Mammary epithelial cell (primary cell): ENCODE measurements at regions of chr3 and their contacts with region 1.

Region 1: GRCh38 chr3:59424268-59425010 is 374.6 kb upstream of the CFAP20DC start:
- DNase-seq: peak; percentile 92
- H3K4me3 ChIP-seq: no peak overlapping the region
- H3K27ac ChIP-seq: peak overlapping the region; percentile 59
- H3K4me1 ChIP-seq: peaks cover 40% of the 10 kb centered on the region
- H3K27me3 ChIP-seq: no peaks in the 10 kb centered on the region
- CTCF ChIP-seq: no peak

Region 2: GRCh38 chr3:58585005-58585786 is 839.2 kb before region 1 on chr3:
- CTCF ChIA-PET with region 1: interaction called, 13 read pairs
- dilution Hi-C with region 1: no loop called
- in situ Hi-C with region 1: no loop called
- intact Hi-C with region 1: no loop called
- DNase-seq: peak; percentile 53
- H3K4me3 ChIP-seq: peak overlapping the region; percentile 16 to 53 (median 49)
- H3K27ac ChIP-seq: no peak overlapping the region
- H3K4me1 ChIP-seq: peaks cover 9% of the 10 kb centered on the region
- H3K27me3 ChIP-seq: peaks cover 15% of the 10 kb centered on the region
- CTCF ChIP-seq: peak; percentile 66

Region 3: DNA sequence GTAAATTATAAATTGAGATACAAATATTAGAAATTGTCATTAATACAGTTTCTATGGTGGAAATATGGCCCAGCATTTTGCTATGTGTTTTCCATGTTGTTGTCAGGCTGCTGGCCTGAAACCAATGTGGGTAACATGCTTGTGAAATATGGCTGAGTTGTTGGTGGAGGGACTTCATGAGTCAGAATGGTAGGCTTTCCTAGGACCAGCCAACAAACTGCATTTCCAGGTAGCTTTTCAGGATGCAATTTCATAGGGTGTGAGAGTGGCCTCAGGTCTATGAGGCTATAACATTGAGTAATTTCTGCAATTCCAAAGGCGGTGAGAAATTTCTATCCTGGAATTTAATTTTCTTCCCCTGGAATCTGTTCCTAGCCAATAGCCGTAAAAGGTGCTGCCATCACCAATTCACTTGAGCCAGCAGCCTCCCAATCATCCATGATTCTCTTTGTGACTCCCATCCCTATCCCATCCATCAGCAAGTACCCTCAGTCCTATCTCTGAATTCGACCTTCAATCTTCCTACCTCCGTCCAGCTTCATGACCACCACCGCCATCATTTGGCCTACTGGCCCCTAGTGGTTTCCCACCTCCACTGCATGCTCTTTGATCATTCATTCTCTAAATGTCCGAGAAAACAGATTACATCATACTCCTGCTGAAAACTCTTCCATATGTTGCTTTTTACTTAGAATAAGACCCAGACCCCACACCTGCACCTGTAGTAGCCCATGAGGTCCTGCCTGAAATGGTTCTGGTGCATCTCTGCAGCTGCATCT is 98.0 kb before region 1 on chr3:
- CTCF ChIA-PET with region 1: no interaction called
- dilution Hi-C with region 1: no loop called
- in situ Hi-C with region 1: no loop called
- intact Hi-C with region 1: loop called (anchors 2 kb)
- DNase-seq: peak; percentile 64
- H3K4me3 ChIP-seq: no peak overlapping the region
- H3K27ac ChIP-seq: peak overlapping the region; percentile 70
- H3K4me1 ChIP-seq: peaks cover 26% of the 10 kb centered on the region
- H3K27me3 ChIP-seq: no peaks in the 10 kb centered on the region
- CTCF ChIP-seq: peak; percentile 29 to 31

Region 4: DNA sequence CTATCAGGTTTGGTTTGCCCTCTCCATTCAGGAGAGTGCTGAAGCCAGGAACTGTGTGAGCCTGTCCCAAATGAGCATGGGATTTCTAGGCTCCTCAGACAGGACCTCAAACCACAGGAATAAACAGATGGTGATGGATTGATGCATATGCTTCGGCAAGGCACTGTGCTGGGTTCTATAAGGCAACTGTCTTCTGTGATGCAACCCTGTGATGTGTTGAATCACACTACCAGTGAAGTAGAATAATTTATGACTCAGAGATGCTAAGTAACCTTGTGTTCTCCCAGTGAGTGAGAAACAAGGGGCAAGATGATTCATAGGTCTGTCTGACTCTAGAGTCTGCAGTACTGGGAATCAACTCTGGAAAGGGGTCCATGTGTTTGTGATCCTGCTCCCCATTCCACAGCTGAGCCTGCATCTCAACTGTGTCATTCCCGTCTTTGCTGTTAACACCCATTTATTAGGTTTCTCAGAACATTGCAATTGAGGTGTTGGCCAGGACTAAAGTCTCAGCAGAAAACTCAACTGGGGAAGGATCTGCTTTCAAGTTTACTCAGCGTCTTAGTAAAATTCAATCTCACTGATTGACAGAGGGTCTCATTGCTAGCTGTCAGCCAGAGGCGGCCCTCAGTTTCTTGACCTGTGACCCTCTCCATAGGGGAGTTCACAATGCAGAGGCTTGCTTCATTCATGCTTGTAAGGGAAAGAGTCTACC is 135.4 kb after region 1 on chr3:
- CTCF ChIA-PET with region 1: interaction called, 3 read pairs
- dilution Hi-C with region 1: no loop called
- in situ Hi-C with region 1: no loop called
- intact Hi-C with region 1: loop called (anchors 5 kb)
- DNase-seq: peak; percentile 99
- H3K4me3 ChIP-seq: no peak overlapping the region
- H3K27ac ChIP-seq: peak overlapping the region; percentile 85
- H3K4me1 ChIP-seq: peaks cover 57% of the 10 kb centered on the region
- H3K27me3 ChIP-seq: no peaks in the 10 kb centered on the region
- CTCF ChIP-seq: no peak